GM12878 (cell line): ENCODE measurements at regions of chr7 and their contacts with region 1.

Region 1: DNA sequence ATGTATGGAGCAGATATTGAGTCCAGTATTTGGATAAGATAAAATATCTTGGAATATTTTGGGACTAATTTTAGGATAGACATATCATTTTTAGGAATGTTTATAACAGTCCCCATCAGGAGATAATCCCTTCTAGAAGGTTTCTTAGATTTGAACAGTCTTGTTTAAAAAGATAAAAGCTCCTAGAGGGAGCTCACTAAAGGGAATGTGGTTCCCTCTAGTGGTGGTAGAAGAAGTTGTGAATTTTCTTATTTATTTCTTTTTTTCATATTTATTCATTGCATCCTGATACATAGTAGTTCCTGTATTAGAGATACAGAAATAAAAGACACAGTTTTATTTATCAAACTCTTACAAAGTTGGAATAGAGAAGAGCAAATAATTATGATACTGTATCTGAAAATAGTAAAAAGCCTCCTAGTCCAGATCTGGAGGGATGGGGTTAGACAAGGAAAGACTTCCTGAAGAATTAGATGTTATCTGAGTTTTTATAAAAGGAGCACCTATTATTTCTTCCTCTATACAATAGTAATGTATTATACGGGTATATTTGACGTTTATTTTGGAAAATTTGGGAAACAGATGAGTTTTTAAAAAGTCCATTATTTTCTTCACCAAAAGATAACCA is 24.5 kb upstream of the KLF14 start:
- DNase-seq: no peak
- ATAC-seq: peak; percentile 63
- H3K4me3 ChIP-seq: no peak overlapping the region
- H3K27ac ChIP-seq: no peak overlapping the region
- H3K4me1 ChIP-seq: no peaks in the 10 kb centered on the region
- H3K27me3 ChIP-seq: no peaks in the 10 kb centered on the region; a peak in 1 of 4 replicates
- CTCF ChIP-seq: peak; percentile 41 to 59 (median 48)
- EP300 ChIP-seq: no peak
- POLR2A ChIP-seq: no peak
- RAD21 ChIP-seq: peak; percentile 92

Region 2: DNA sequence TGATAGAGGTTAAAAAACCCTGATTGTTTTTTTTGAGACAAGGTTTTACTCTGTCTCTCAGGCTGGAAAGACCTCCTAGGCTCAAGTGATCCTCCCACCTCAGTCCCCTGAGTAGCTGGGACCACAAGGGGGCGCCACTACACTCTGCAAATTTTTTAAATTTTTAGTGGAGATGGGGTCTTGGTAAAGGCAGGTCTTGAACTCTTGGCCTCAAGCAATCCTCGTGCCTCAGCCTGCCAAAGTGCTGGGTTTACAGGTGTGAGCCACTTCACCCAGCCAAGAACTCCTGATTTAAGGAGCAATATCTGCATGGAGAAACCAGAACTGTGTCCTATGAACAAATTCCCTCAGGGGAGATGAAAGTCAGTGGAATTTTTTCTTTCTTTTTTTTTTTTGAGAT is 695.5 kb before region 1 on chr7:
- CTCF ChIA-PET with region 1: interaction called, 16 read pairs
- POLR2A ChIA-PET with region 1: no interaction called
- RAD21 ChIA-PET with region 1: interaction called, 6 read pairs
- SMC1A ChIA-PET with region 1: interaction called, 4 read pairs
- in situ Hi-C with region 1: no loop called
- intact Hi-C with region 1: loop called (anchors 2 kb)
- DNase-seq: no peak
- ATAC-seq: peak; percentile 87
- H3K4me3 ChIP-seq: no peak overlapping the region
- H3K27ac ChIP-seq: no peak overlapping the region
- H3K4me1 ChIP-seq: no peaks in the 10 kb centered on the region
- H3K27me3 ChIP-seq: no peaks in the 10 kb centered on the region
- CTCF ChIP-seq: peak; percentile 55 to 80 (median 74)
- EP300 ChIP-seq: no peak
- POLR2A ChIP-seq: no peak
- RAD21 ChIP-seq: peak; percentile 75

Region 3: GRCh38 chr7:130205084-130205947 is 553.2 kb before region 1 on chr7 and contains the start of gene TMEM209:
- CTCF ChIA-PET with region 1: interaction called, 10 read pairs
- POLR2A ChIA-PET with region 1: no interaction called
- RAD21 ChIA-PET with region 1: interaction called, 3 read pairs
- SMC1A ChIA-PET with region 1: interaction called, 3 read pairs
- in situ Hi-C with region 1: no loop called
- intact Hi-C with region 1: no loop called
- DNase-seq: peak; percentile 84
- ATAC-seq: peak; percentile 97
- H3K4me3 ChIP-seq: peak within 1 kb of the TSS; percentile 90
- H3K27ac ChIP-seq: peak within 1 kb of the TSS; percentile 96
- H3K4me1 ChIP-seq: no peaks in the 10 kb centered on the region
- H3K27me3 ChIP-seq: no peaks in the 10 kb centered on the region
- CTCF ChIP-seq: no peak
- EP300 ChIP-seq: 0 out of 4 replicates have a peak, but pooled peaks of 1 of the 2 experiments have one; percentile 23
- POLR2A ChIP-seq: peak; percentile 99
- RAD21 ChIP-seq: no peak
- polyA plus RNA-seq, gene TMEM209: 22.2 to 38.2 TPM

Region 4: DNA sequence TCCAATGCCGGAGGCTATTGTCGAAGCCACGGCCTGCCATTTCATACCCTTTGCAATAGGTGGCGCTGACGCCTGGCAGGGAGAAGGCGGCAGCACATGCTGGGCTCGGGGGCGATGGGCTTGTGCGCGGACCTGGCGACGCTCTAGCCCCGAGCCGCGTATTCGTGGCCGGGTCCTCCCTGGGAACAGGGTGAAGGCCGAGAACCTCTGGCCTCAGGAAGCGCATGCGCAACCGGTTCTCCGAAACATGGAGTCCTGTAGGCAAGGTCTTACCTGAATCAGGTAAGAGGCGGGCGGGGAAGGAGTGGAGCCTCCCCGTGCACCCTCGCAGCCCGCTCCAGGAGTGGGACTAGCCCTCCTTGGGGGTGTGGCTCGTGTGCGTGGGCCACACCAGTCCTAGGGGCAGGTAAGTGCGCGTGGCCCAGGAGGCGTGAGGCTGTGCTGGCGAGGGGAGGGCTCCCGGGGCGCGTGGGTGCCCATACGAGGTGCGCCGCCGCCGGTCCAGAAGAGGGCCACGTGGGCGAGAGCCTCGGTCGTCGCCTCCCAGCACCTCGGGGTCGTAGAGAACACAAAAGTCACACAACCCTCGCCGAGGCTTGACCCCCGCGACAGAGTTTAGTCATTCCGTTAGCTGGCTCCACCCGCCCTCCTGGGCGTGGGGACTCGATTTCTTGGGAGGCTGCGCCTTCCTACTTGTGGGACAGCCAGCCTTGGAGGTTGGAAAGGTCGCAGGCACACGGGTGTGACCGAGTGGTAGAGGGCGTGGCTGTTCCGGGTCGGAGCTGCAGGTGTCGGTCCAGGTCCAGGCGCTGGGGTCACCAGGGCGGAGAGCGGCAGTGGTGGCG is 272.2 kb before region 1 on chr7:
- CTCF ChIA-PET with region 1: interaction called, 5 read pairs
- POLR2A ChIA-PET with region 1: no interaction called
- RAD21 ChIA-PET with region 1: interaction called, 3 read pairs
- SMC1A ChIA-PET with region 1: interaction called, 4 read pairs
- in situ Hi-C with region 1: no loop called
- intact Hi-C with region 1: loop called (anchors 5 kb)
- DNase-seq: no peak
- ATAC-seq: peak; percentile 88
- H3K4me3 ChIP-seq: peak overlapping the region; percentile 48
- H3K27ac ChIP-seq: no peak overlapping the region
- H3K4me1 ChIP-seq: peaks cover 11% of the 10 kb centered on the region
- H3K27me3 ChIP-seq: no peaks in the 10 kb centered on the region; a peak in 1 of 4 replicates
- CTCF ChIP-seq: peak; percentile 58 to 77 (median 70)
- EP300 ChIP-seq: no peak
- POLR2A ChIP-seq: no peak
- RAD21 ChIP-seq: peak; percentile 64

Region 5: GRCh38 chr7:130683026-130683425 is 75.5 kb before region 1 on chr7:
- CTCF ChIA-PET with region 1: no interaction called
- POLR2A ChIA-PET with region 1: no interaction called
- RAD21 ChIA-PET with region 1: no interaction called
- SMC1A ChIA-PET with region 1: no interaction called
- in situ Hi-C with region 1: no loop called
- intact Hi-C with region 1: no loop called
- DNase-seq: no peak
- ATAC-seq: no peak
- H3K4me3 ChIP-seq: no peak overlapping the region
- H3K27ac ChIP-seq: no peak overlapping the region
- H3K4me1 ChIP-seq: no peaks in the 10 kb centered on the region
- H3K27me3 ChIP-seq: no peaks in the 10 kb centered on the region
- CTCF ChIP-seq: no peak
- EP300 ChIP-seq: no peak
- POLR2A ChIP-seq: no peak
- RAD21 ChIP-seq: no peak

Region 6: GRCh38 chr7:130741331-130741995 is 17.1 kb before region 1 on chr7:
- CTCF ChIA-PET with region 1: interaction called, 7 read pairs
- POLR2A ChIA-PET with region 1: no interaction called
- RAD21 ChIA-PET with region 1: interaction called, 6 read pairs
- SMC1A ChIA-PET with region 1: interaction called, 11 read pairs
- in situ Hi-C with region 1: no loop called
- intact Hi-C with region 1: no loop called
- DNase-seq: no peak
- ATAC-seq: peak; percentile 76
- H3K4me3 ChIP-seq: no peak overlapping the region; the same call in 1 of the 2 replicates
- H3K27ac ChIP-seq: no peak overlapping the region
- H3K4me1 ChIP-seq: peaks cover 3% of the 10 kb centered on the region
- H3K27me3 ChIP-seq: peaks cover 0 to 8% of the 10 kb centered on the region in 2 experiments; a peak in 2 of 4 replicates
- CTCF ChIP-seq: no peak
- EP300 ChIP-seq: no peak
- POLR2A ChIP-seq: no peak
- RAD21 ChIP-seq: no peak

Region 7: GRCh38 chr7:130768854-130769253 is 10.3 kb after region 1 on chr7:
- CTCF ChIA-PET with region 1: interaction called, 10 read pairs
- POLR2A ChIA-PET with region 1: interaction called, 3 read pairs
- RAD21 ChIA-PET with region 1: no interaction called
- SMC1A ChIA-PET with region 1: no interaction called
- in situ Hi-C with region 1: no loop called
- intact Hi-C with region 1: no loop called
- DNase-seq: no peak
- ATAC-seq: no peak
- H3K4me3 ChIP-seq: no peak overlapping the region
- H3K27ac ChIP-seq: no peak overlapping the region
- H3K4me1 ChIP-seq: no peaks in the 10 kb centered on the region
- H3K27me3 ChIP-seq: no peaks in the 10 kb centered on the region
- CTCF ChIP-seq: no peak
- EP300 ChIP-seq: no peak
- POLR2A ChIP-seq: no peak
- RAD21 ChIP-seq: no peak

Region 8: GRCh38 chr7:130821864-130822263 is 63.3 kb after region 1 on chr7:
- CTCF ChIA-PET with region 1: no interaction called
- POLR2A ChIA-PET with region 1: no interaction called
- RAD21 ChIA-PET with region 1: no interaction called
- SMC1A ChIA-PET with region 1: no interaction called
- in situ Hi-C with region 1: no loop called
- intact Hi-C with region 1: no loop called
- DNase-seq: no peak
- ATAC-seq: no peak
- H3K4me3 ChIP-seq: no peak overlapping the region
- H3K27ac ChIP-seq: no peak overlapping the region
- H3K4me1 ChIP-seq: no peaks in the 10 kb centered on the region
- H3K27me3 ChIP-seq: no peaks in the 10 kb centered on the region
- CTCF ChIP-seq: no peak
- EP300 ChIP-seq: no peak
- POLR2A ChIP-seq: no peak
- RAD21 ChIP-seq: no peak

Region 9: DNA sequence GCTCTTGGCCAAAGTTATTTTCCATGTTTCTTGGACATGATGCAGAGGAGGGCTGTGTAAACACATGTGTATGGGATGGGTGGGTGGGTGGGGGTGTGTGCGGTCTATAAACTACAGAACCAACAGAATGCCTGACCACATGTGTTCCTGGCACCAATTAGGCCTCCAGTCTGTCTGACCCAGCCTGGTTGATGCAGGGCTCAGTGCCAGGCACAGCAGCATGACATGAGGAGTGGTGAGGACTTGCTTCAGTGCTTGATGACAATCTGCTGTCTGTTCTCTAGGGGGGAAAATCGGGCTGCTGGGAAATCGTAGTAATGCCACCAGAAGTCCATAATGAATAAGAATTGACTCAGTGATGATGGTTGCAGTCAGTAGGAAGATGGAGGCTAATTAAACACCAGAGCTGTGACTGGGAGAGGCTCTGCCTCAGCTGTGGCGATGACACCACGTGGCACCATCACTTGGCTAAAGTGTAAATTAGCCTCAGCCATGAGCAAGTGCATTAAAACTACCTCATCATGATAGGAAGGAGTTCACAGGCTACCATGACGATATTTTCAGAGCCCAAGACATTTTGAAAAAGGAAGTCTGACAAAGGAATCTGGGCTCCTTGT is 1058.0 kb after region 1 on chr7:
- CTCF ChIA-PET with region 1: no interaction called
- POLR2A ChIA-PET with region 1: no interaction called
- RAD21 ChIA-PET with region 1: no interaction called
- SMC1A ChIA-PET with region 1: no interaction called
- in situ Hi-C with region 1: no loop called
- intact Hi-C with region 1: no loop called
- DNase-seq: no peak
- ATAC-seq: no peak
- H3K4me3 ChIP-seq: no peak overlapping the region
- H3K27ac ChIP-seq: no peak overlapping the region
- H3K4me1 ChIP-seq: no peaks in the 10 kb centered on the region
- H3K27me3 ChIP-seq: peaks cover 0 to 3% of the 10 kb centered on the region in 2 experiments; a peak in 2 of 4 replicates
- CTCF ChIP-seq: no peak
- EP300 ChIP-seq: no peak
- POLR2A ChIP-seq: no peak
- RAD21 ChIP-seq: no peak